ENCODE measurements at regions of chr9 and their contacts with region 1.

Region 1: DNA sequence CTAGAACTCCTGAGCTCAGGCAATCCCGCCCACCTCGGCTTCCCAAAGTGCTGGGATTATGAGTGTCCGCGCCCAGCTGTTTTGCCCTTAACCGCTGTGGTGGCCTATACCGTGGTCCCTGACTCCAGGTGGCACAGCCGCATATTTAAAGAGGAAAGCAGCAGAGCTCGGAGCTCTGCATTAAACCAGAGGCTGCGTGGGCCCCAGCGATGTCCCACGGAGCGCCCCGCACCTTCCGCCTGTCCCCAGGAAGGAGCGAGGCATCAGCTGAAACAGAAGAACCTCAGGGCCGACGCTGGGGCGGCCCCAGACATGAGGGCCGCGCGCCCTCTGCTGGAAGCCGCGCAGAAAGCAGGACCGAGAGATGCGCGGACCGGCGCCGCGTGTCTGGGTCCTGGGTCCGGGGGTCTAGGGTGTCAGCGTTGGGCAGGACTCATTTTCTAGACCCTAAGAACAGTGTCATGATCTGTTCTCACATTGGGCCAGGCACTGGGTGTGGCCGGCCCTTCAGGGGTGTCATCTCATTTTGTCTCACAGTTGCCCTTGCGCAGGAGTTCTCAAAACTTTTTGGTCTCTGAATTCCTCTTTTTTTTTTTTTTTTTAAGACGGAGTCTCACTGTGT is 37.7 kb downstream of the LAMC3 start:
- DNase-seq: peak; percentile 83
- H3K27ac ChIP-seq: no peak overlapping the region
- CTCF ChIP-seq: peak; percentile 99

Region 2: GRCh38 chr9:131008909-131009618 is 37.6 kb before region 1 on chr9 and contains the start of gene LAMC3:
- CTCF ChIA-PET with region 1: interaction called, 14 read pairs
- POLR2A ChIA-PET with region 1: no interaction called
- DNase-seq: peak; percentile 69
- H3K27ac ChIP-seq: no peak within 1 kb of the TSS
- CTCF ChIP-seq: peak; percentile 66

Region 3: GRCh38 chr9:131031005-131031641 is 15.6 kb before region 1 on chr9:
- CTCF ChIA-PET with region 1: interaction called, 12 read pairs
- POLR2A ChIA-PET with region 1: no interaction called
- DNase-seq: no peak
- H3K27ac ChIP-seq: no peak overlapping the region
- CTCF ChIP-seq: no peak

Region 4: DNA sequence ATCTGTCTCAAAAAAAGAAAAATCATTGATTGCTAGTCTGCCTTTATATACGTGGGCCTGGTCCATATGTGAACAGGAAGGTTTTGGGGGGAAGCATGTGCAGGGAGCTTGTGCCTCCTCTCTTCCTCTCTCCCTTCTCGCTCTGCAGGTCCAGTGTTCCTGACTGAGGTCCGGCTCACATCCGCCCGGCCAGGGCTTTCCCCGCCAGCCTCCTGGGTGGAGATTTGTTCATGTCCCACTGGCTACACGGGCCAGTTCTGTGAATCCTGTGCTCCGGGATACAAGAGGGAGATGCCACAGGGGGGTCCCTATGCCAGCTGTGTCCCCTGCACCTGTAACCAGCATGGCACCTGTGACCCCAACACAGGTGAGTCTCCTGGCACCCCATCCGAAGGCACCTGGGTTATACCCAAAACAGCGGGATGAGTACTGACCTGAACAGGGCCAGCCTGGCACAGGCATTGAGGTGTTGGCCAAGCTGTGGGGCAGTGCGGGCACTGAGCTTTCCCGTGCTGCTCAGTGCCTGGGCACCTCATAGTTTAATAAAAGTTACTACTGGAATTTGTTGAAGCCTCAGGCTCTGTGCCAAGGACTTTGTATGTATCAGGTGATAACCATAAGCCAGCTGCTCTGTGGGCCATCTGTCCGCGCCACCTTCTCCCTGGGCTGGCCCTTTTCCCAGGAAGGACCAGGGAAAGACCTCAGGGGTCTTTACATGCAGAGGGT is 10.3 kb after region 1 on chr9:
- CTCF ChIA-PET with region 1: interaction called, 15 read pairs
- POLR2A ChIA-PET with region 1: no interaction called
- DNase-seq: no peak
- H3K27ac ChIP-seq: no peak overlapping the region
- CTCF ChIP-seq: no peak

Region 5: DNA sequence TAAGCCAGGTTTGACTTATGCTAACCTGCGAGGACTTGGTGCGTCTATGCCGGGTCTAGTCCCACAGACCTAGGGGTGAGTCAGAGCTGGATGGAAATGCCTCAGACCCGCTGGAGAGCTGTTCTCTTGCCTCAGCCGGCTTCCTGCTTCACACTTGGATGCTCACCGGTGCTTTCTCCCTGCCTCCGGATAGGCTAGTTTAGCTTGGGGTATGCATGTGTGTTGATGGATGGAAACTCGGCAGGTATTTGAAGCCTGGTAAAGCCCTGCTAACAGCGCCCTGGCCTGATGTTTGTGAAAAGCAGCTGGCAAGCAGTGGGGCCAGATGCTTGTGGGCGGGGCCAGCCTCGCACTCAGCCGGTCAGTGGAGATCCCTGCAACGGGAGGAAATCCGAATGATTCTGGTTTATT is 376.5 kb after region 1 on chr9:
- CTCF ChIA-PET with region 1: no interaction called
- POLR2A ChIA-PET with region 1: no interaction called
- DNase-seq: peak; percentile 98
- H3K27ac ChIP-seq: peak overlapping the region; percentile 92
- CTCF ChIP-seq: no peak